ENCODE measurements at regions of chr7 and their contacts with region 1.

Region 1: DNA sequence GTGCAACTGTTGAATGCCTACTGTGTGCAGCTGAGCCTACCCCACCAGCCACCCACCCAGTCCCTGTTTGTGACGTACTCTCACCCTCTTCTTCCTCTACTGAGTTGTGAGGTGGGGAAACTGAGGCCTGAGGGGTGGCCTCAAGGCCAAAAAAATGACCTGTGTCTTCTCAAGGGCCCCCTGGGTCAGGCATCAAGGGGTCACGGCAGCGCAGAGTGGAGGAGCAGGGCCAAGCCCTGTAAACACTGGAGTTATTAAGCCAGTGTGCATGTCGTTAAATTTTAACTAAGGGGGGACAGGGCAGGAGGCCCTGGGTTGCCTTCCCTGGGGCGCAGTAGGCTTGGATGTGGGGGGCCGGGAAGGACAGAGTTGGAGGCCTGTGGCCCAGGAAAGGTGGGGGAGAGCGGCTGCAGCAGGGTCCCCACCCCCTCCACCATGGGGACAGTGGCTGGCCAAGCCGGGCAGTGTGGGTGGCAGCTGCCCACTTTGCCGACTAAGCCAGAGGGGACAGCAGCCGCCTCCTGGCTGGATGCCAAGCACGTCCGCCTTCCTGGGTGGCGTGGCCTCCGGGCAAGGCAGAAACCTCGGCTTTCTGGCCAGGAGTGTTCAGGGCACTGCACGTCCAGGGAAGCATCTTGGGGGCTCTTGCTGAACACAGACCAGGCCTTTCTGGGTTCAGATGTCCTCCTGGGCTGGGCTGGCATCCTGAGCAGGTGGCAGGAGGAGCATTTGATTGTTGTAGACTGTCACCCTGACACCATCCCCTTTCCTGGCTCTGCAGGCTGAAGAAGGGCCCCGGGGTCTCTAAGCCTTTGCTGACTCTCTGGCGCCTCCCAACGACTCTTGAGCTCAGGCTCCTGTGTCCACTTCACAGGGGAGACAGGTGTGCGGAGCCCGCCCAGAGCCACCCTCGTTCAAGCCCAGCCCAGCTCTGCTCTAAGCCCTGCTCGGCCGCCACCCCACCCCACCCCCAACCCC is 1.9 kb downstream of the SLC29A4 start:
- DNase-seq: peak; percentile 87
- ATAC-seq: peak; percentile 89
- H3K4me3 ChIP-seq: peak overlapping the region; percentile 43 to 76 (median 73); a peak in 5 of 6 replicates
- H3K27ac ChIP-seq: peak overlapping the region; percentile 66
- H3K4me1 ChIP-seq: peaks cover 8% of the 10 kb centered on the region; the same call in 1 of the 2 replicates
- H3K27me3 ChIP-seq: no peaks in the 10 kb centered on the region; a peak in 1 of 5 replicates
- CTCF ChIP-seq: peak; percentile 82
- EP300 ChIP-seq: peak in 1 of 2 experiments; percentile 75; a peak in 2 of 4 replicates
- POLR2A ChIP-seq: peak in 1 of 2 experiments; percentile 67; a peak in 2 of 4 replicates
- RAD21 ChIP-seq: peak; percentile 63

Region 2: DNA sequence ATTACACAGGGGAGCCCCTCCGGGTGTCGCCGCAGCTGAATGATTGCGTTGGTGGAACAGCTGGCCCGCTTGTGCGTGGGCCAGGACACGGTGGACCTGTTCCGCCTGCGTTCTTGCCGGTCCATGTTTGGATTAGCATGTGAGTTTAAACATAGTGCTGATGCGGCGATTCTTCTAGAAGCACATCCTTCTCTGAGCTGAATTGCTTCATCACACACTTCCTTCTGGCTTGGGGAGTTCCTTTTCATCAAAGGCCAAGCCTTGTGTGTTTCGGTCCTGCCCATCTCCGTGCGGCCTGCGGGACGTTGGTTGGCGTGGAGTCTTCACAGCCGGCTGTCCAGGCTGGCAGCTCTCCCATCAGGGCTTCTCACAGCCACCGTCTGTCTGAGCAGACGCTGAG is 47.3 kb before region 1 on chr7:
- CTCF ChIA-PET with region 1: interaction called, 21 read pairs
- POLR2A ChIA-PET with region 1: interaction called, 19 read pairs
- in situ Hi-C with region 1: loop called (anchors 5 kb)
- intact Hi-C with region 1: loop called (anchors 1 kb)
- DNase-seq: no peak
- ATAC-seq: no peak
- H3K4me3 ChIP-seq: no peak overlapping the region
- H3K27ac ChIP-seq: no peak overlapping the region
- H3K4me1 ChIP-seq: peaks cover 22% of the 10 kb centered on the region
- H3K27me3 ChIP-seq: peaks cover 0 to 1% of the 10 kb centered on the region in 2 experiments; a peak in 3 of 5 replicates
- CTCF ChIP-seq: no peak
- EP300 ChIP-seq: no peak
- POLR2A ChIP-seq: no peak
- RAD21 ChIP-seq: no peak

Region 3: DNA sequence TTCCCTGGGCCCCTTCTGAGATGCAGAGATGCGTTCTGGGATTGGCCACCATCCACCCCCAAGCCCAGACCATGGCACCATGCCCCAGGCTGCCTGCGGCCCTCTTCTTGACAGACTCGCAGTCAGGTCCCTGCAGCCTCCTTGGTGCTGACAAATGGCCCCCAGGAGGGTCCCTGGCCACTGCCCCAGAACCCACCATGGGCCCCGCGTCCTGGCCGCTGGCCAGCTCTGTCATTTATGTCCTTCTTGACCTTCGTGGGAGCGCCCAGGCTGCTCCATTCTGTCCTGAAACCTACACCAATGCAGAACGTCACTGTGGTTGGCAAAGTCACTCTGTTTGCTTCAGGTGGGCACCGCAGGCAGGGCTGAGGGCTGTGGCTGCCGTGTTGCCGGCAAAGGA is 41.3 kb before region 1 on chr7:
- CTCF ChIA-PET with region 1: interaction called, 21 read pairs
- POLR2A ChIA-PET with region 1: interaction called, 19 read pairs
- in situ Hi-C with region 1: loop called (anchors 5 kb)
- intact Hi-C with region 1: loop called (anchors 1 kb)
- DNase-seq: no peak
- ATAC-seq: no peak
- H3K4me3 ChIP-seq: no peak overlapping the region
- H3K27ac ChIP-seq: no peak overlapping the region
- H3K4me1 ChIP-seq: peaks cover 18% of the 10 kb centered on the region
- H3K27me3 ChIP-seq: peaks cover 0 to 4% of the 10 kb centered on the region in 2 experiments; a peak in 3 of 5 replicates
- CTCF ChIP-seq: no peak
- EP300 ChIP-seq: no peak
- POLR2A ChIP-seq: no peak
- RAD21 ChIP-seq: no peak